ENCODE measurements at regions of chr6 and their contacts with region 1.

Region 1: DNA sequence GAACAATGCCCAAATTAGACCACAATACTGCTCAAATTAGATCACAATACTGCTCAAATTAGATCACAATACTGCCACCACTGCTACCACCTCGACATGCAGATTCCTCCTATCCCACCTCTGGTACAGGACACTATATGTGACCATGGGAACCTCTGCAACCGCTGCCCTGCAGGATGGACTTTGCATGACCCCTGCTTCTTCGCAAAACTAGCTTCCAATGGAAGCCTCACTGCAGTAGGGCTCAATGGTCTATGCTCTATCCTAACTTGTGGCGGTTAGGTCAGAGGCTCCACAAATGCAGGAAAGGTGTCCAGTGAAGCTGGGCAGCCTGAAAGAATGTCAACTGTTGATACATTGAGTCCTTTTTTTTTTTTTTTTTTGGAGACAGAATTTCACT is 7.8 kb upstream of the TXNDC5 start:
- DNase-seq: no peak
- H3K4me3 ChIP-seq: no peak overlapping the region
- H3K27ac ChIP-seq: no peak overlapping the region
- H3K4me1 ChIP-seq: no peaks in the 10 kb centered on the region
- H3K27me3 ChIP-seq: no peaks in the 10 kb centered on the region
- CTCF ChIP-seq: no peak

Region 2: GRCh38 chr6:7819431-7820015 is 98.9 kb before region 1 on chr6:
- CTCF ChIA-PET with region 1: interaction called, 20 read pairs
- POLR2A ChIA-PET with region 1: no interaction called
- intact Hi-C with region 1: no loop called
- DNase-seq: no peak
- H3K4me3 ChIP-seq: no peak overlapping the region
- H3K27ac ChIP-seq: no peak overlapping the region
- H3K4me1 ChIP-seq: no peaks in the 10 kb centered on the region
- H3K27me3 ChIP-seq: no peaks in the 10 kb centered on the region
- CTCF ChIP-seq: no peak

Region 3: GRCh38 chr6:8085053-8085511 is 166.7 kb after region 1 on chr6:
- CTCF ChIA-PET with region 1: no interaction called
- POLR2A ChIA-PET with region 1: no interaction called
- intact Hi-C with region 1: no loop called
- DNase-seq: peak; percentile 81 to 87
- H3K4me3 ChIP-seq: no peak overlapping the region
- H3K27ac ChIP-seq: peak overlapping the region; percentile 72
- H3K4me1 ChIP-seq: peaks cover 58% of the 10 kb centered on the region
- H3K27me3 ChIP-seq: no peaks in the 10 kb centered on the region
- CTCF ChIP-seq: no peak